Panc1 (cell line): ENCODE measurements at regions of chr20 and their contacts with region 1.

Region 1: DNA sequence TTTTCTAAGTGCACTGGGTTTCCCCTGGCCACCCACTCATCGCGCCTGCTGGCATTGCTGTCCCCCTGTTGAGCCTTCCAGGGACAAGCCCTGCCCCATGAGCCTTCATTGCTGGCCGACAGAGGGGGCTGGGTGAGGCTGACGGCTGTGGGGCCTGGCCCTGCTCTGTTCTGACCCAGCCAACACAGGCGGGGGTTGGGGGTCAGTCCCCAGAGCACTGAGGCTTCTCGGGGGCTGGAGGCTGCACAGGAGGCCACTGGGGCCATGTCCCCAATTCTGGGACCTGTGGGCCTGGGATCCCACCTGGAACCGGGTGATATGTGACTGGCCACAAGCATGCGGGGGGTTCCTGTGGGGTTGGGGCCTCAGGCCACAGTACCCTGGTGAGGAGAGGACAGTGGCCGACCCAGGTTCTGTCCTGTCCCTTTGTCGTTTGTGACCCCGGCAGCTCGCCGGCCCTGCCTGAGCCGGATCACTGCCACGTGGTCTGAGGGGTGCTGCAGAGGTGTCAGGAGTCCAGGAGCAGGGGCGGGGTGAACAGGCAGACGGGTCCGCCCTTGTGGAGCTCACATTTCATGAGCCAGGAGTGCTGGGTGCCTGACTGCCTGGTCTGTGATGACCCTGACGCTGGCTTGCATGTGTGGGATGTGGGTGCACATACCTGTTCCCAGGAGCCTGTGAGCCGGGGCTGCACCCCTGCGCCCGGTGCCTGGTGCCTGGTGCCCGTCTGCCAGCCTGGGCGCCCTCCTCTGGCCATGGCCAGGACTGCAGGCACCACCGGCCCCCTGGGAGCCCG is 2.1 kb upstream of the COL20A1 start:
- DNase-seq: no peak
- ATAC-seq: peak; percentile 61
- H3K4me3 ChIP-seq: no peak overlapping the region
- H3K27ac ChIP-seq: no peak overlapping the region
- H3K4me1 ChIP-seq: peaks cover 13% of the 10 kb centered on the region
- H3K27me3 ChIP-seq: no peaks in the 10 kb centered on the region
- CTCF ChIP-seq: peak; percentile 92

Region 2: DNA sequence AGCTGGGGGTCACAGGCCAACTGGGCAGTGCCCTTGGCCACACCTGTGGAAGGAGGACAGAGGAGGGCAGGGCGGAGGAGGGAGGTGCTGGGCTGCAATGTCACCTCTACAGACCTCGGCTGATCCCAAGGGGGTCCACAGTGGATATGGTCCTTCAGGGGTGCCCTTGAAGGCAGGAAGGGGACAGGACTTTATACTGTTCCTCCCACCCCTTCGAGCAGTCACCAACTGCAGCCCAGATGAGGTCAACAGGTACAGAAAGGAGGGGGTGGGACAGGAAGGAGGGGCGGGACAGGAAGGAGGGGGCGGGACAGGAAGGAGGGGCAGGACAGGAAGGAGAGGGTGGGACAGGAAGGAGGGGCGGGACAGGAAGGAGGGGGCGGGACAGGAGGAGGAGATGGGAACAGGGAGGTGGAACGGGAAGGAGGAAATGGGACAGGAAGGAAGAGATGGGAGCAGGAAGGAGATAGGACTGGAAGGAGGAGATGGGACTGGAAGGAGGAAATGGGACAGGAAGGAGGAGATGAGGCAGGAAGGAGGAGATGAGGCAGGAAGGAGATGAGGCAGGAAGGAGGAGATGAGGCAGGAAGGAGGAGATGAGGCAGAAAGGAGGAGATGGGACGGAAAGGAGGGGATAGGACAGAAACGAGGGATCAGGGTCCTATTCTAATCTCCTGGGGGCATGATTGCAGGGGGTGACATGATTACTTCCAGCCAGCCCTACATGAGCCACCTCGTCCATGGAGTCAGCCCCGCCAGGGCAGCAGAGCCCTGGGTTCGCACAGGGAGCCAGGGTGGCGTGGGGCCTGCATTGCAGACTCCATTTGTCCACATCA is 514.0 kb before region 1 on chr20:
- CTCF ChIA-PET with region 1: no interaction called
- POLR2A ChIA-PET with region 1: no interaction called
- in situ Hi-C with region 1: no loop called
- intact Hi-C with region 1: no loop called
- DNase-seq: no peak
- ATAC-seq: peak; percentile 28; the same call in 1 of the 2 replicates
- H3K4me3 ChIP-seq: no peak overlapping the region
- H3K27ac ChIP-seq: peak overlapping the region; percentile 57; the same call in 1 of the 2 replicates
- H3K4me1 ChIP-seq: no peaks in the 10 kb centered on the region; the same call in none of the 2 replicates
- H3K27me3 ChIP-seq: no peaks in the 10 kb centered on the region
- CTCF ChIP-seq: no peak

Region 3: GRCh38 chr20:63326897-63327745 is 36.2 kb after region 1 on chr20:
- CTCF ChIA-PET with region 1: no interaction called
- POLR2A ChIA-PET with region 1: no interaction called
- in situ Hi-C with region 1: no loop called
- intact Hi-C with region 1: no loop called
- DNase-seq: no peak
- ATAC-seq: no peak
- H3K4me3 ChIP-seq: no peak overlapping the region
- H3K27ac ChIP-seq: no peak overlapping the region
- H3K4me1 ChIP-seq: no peaks in the 10 kb centered on the region
- H3K27me3 ChIP-seq: no peaks in the 10 kb centered on the region
- CTCF ChIP-seq: no peak

Region 4: GRCh38 chr20:63344616-63345327 is 53.9 kb after region 1 on chr20:
- CTCF ChIA-PET with region 1: no interaction called
- POLR2A ChIA-PET with region 1: no interaction called
- in situ Hi-C with region 1: no loop called
- intact Hi-C with region 1: no loop called
- DNase-seq: no peak
- ATAC-seq: no peak
- H3K4me3 ChIP-seq: no peak overlapping the region
- H3K27ac ChIP-seq: no peak overlapping the region
- H3K4me1 ChIP-seq: no peaks in the 10 kb centered on the region
- H3K27me3 ChIP-seq: peaks cover 2% of the 10 kb centered on the region; the same call in 1 of the 2 replicates
- CTCF ChIP-seq: no peak

Region 5: DNA sequence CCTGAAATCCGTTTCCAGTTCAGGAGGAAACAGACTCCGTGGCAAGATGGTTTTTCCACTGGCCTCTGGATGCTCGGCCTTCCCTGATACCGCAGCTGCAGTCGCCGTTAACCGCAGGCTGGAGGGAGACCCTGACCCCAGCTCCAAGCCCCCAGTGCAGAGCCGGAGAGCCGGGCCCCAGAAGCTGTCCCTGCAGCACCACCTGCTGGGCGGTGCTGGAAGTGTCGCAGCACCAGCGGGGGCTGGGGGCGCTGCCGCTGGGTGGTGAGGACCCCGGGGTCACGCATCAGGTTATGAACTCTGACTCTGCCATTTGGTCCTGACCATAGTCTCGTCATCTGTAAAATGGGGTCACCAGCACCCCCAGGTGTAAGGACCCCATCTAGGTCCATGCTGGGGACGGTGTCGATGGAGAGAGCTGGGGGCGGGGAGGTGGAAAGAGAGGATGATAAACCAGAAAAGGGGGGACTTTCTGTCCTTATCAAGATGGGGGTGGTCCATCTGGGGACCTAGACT is 91.0 kb after region 1 on chr20:
- CTCF ChIA-PET with region 1: interaction called, 3 read pairs
- POLR2A ChIA-PET with region 1: no interaction called
- in situ Hi-C with region 1: loop called (anchors 25 kb)
- intact Hi-C with region 1: no loop called
- DNase-seq: peak; percentile 5
- ATAC-seq: peak; percentile 64
- H3K4me3 ChIP-seq: no peak overlapping the region
- H3K27ac ChIP-seq: no peak overlapping the region
- H3K4me1 ChIP-seq: no peaks in the 10 kb centered on the region; the same call in 1 of the 2 replicates
- H3K27me3 ChIP-seq: no peaks in the 10 kb centered on the region
- CTCF ChIP-seq: peak; percentile 99